Activated CD4-positive, alpha-beta T cell treated with anti-CD3 and anti-CD28 coated beads for 36 hours (primary cell): ENCODE measurements at regions of chr17 and their contacts with region 1.

Region 1: GRCh38 chr17:35214631-35215273 is 20.6 kb upstream of the SLC35G3 start:
- DNase-seq: peak; percentile 54
- ATAC-seq: peak; percentile 67
- H3K4me3 Mint-ChIP-seq: peak overlapping the region; percentile 49
- H3K27ac Mint-ChIP-seq: peak overlapping the region; percentile 80
- H3K4me1 Mint-ChIP-seq: peaks cover 85% of the 10 kb centered on the region
- H3K27me3 Mint-ChIP-seq: no peaks in the 10 kb centered on the region

Region 2: GRCh38 chr17:34961093-34961911 is 253.4 kb before region 1 on chr17 and contains the starts of genes CCT6B and ZNF830:
- CTCF ChIA-PET with region 1: no interaction called
- POLR2A ChIA-PET with region 1: no interaction called
- intact Hi-C with region 1: loop called in 1 of 2 experiments (anchors 10 kb)
- DNase-seq: peak; percentile 95
- ATAC-seq: peak; percentile 91
- H3K4me3 Mint-ChIP-seq: peak within 1 kb of the TSS; percentile 99
- H3K27ac Mint-ChIP-seq: peak within 1 kb of the TSS; percentile 100
- H3K4me1 Mint-ChIP-seq: peaks cover 26% of the 10 kb centered on the region
- H3K27me3 Mint-ChIP-seq: no peaks in the 10 kb centered on the region
- total RNA-seq, gene CCT6B: 0.95 to 1.6 TPM
- total RNA-seq, gene ZNF830: 20.0 TPM

Region 3: GRCh38 chr17:35082073-35082657 is 132.6 kb before region 1 on chr17:
- CTCF ChIA-PET with region 1: no interaction called
- POLR2A ChIA-PET with region 1: no interaction called
- intact Hi-C with region 1: loop called in 1 of 2 experiments (anchors 5 kb)
- DNase-seq: no peak
- ATAC-seq: peak; percentile 57
- H3K4me3 Mint-ChIP-seq: peak overlapping the region; percentile 1
- H3K27ac Mint-ChIP-seq: peak overlapping the region; percentile 93
- H3K4me1 Mint-ChIP-seq: peaks cover 83% of the 10 kb centered on the region
- H3K27me3 Mint-ChIP-seq: no peaks in the 10 kb centered on the region

Region 4: GRCh38 chr17:35170968-35171771 is 43.6 kb before region 1 on chr17:
- CTCF ChIA-PET with region 1: interaction called, 3 read pairs
- POLR2A ChIA-PET with region 1: no interaction called
- intact Hi-C with region 1: loop called (anchors 5 kb)
- DNase-seq: peak; percentile 32
- ATAC-seq: peak; percentile 76
- H3K4me3 Mint-ChIP-seq: no peak overlapping the region
- H3K27ac Mint-ChIP-seq: peak overlapping the region; percentile 47
- H3K4me1 Mint-ChIP-seq: peaks cover 39% of the 10 kb centered on the region
- H3K27me3 Mint-ChIP-seq: no peaks in the 10 kb centered on the region

Region 5: GRCh38 chr17:35227546-35227945 is 12.8 kb after region 1 on chr17:
- CTCF ChIA-PET with region 1: no interaction called
- POLR2A ChIA-PET with region 1: no interaction called
- intact Hi-C with region 1: no loop called
- DNase-seq: no peak
- ATAC-seq: peak; percentile 72
- H3K4me3 Mint-ChIP-seq: no peak overlapping the region
- H3K27ac Mint-ChIP-seq: no peak overlapping the region
- H3K4me1 Mint-ChIP-seq: peaks cover 47% of the 10 kb centered on the region
- H3K27me3 Mint-ChIP-seq: no peaks in the 10 kb centered on the region

Region 6: GRCh38 chr17:35254107-35254802 is 39.5 kb after region 1 on chr17:
- CTCF ChIA-PET with region 1: no interaction called
- POLR2A ChIA-PET with region 1: no interaction called
- intact Hi-C with region 1: no loop called
- DNase-seq: no peak
- ATAC-seq: no peak
- H3K4me3 Mint-ChIP-seq: no peak overlapping the region
- H3K27ac Mint-ChIP-seq: peak overlapping the region; percentile 52
- H3K4me1 Mint-ChIP-seq: peaks cover 75% of the 10 kb centered on the region
- H3K27me3 Mint-ChIP-seq: no peaks in the 10 kb centered on the region

Region 7: DNA sequence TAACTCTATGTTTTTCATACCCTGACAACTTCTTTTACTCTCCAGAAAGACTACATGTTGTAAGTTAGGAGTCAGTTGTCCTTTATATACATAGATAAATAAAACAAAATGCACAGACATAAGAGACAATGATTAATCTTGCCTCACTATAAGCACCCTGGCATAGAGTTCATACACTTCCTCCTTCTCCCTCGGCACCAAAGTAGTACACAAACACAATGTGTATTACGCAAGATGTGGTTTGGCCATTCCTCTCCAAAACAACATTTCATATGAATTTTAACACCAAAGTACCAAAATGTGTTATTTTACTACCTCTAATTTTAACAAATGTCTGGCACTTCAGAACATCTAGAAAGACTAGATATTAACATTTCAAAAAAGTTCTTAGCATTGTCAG is 175.9 kb after region 1 on chr17:
- CTCF ChIA-PET with region 1: no interaction called
- POLR2A ChIA-PET with region 1: no interaction called
- intact Hi-C with region 1: no loop called
- DNase-seq: no peak
- ATAC-seq: no peak
- H3K4me3 Mint-ChIP-seq: no peak overlapping the region
- H3K27ac Mint-ChIP-seq: no peak overlapping the region
- H3K4me1 Mint-ChIP-seq: no peaks in the 10 kb centered on the region
- H3K27me3 Mint-ChIP-seq: peaks cover 2% of the 10 kb centered on the region

Region 8: GRCh38 chr17:35486920-35487732 is 272.4 kb after region 1 on chr17:
- CTCF ChIA-PET with region 1: no interaction called
- POLR2A ChIA-PET with region 1: interaction called, 4 read pairs
- intact Hi-C with region 1: loop called in 1 of 2 experiments (anchors 5 kb)
- DNase-seq: peak; percentile 92
- ATAC-seq: peak; percentile 71
- H3K4me3 Mint-ChIP-seq: peak overlapping the region; percentile 82
- H3K27ac Mint-ChIP-seq: peak overlapping the region; percentile 91
- H3K4me1 Mint-ChIP-seq: peaks cover 36% of the 10 kb centered on the region
- H3K27me3 Mint-ChIP-seq: peaks cover 11% of the 10 kb centered on the region

Region 9: DNA sequence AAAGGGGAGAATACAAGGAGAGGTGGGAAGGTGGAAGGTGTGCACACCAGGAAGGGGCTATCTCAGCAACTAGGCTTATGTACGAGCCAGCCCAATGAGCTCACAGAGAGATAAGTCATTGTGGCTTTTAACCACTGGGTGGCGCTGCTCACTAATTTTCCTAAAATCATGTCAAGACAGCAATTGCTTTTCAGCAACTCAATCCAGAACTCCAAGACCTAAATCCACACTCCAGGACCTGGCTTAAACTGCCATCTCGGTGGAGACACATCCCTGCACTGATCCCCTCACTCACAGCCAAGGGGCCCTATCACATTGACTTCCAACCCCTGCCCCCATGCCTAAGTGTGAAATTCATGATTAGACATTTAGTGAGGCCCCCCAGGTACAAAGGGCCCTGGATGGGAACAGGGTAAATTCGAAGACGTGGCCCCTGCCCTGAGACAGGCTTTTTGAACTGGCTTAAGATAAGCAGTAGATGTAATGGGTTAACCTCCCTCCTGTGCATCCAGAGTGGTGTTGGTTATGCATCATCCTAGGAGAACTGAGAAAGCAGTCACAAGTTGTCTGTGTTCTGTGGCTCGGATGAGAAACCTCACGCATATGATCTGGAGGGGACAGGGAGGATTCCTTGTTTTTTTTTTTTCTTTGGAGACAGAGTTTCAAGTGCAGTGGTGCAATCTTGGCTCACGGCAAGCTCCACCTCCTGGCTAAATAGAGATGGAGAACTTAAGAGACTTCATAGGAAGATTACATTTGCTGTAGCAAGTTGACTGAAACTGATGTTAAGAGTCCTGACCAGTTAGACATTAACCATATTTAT is 755.0 kb after region 1 on chr17:
- CTCF ChIA-PET with region 1: no interaction called
- POLR2A ChIA-PET with region 1: no interaction called
- intact Hi-C with region 1: no loop called
- DNase-seq: peak; percentile 86
- ATAC-seq: peak; percentile 79
- H3K4me3 Mint-ChIP-seq: no peak overlapping the region
- H3K27ac Mint-ChIP-seq: no peak overlapping the region
- H3K4me1 Mint-ChIP-seq: no peaks in the 10 kb centered on the region
- H3K27me3 Mint-ChIP-seq: no peaks in the 10 kb centered on the region